IMR-90 (cell line): ENCODE measurements at regions of chr14 and their contacts with region 1.

Region 1: GRCh38 chr14:61561657-61562276 is 133.5 kb upstream of the HIF1A start:
- DNase-seq: peak; percentile 99
- ATAC-seq: peak; percentile 45
- H3K4me3 ChIP-seq: no peak overlapping the region
- H3K27ac ChIP-seq: peak overlapping the region; percentile 87
- H3K4me1 ChIP-seq: peaks cover 53% of the 10 kb centered on the region
- H3K27me3 ChIP-seq: no peaks in the 10 kb centered on the region
- CTCF ChIP-seq: no peak
- POLR2A ChIP-seq: peak; percentile 72; the same call in 1 of the 2 replicates
- RAD21 ChIP-seq: peak; percentile 29

Region 2: GRCh38 chr14:60738843-60739508 is 822.8 kb before region 1 on chr14:
- CTCF ChIA-PET with region 1: no interaction called
- POLR2A ChIA-PET with region 1: no interaction called
- dilution Hi-C with region 1: no loop called
- in situ Hi-C with region 1: no loop called
- intact Hi-C with region 1: no loop called
- DNase-seq: no peak
- ATAC-seq: no peak
- H3K4me3 ChIP-seq: no peak overlapping the region
- H3K27ac ChIP-seq: no peak overlapping the region
- H3K4me1 ChIP-seq: peaks cover 3% of the 10 kb centered on the region
- H3K27me3 ChIP-seq: no peaks in the 10 kb centered on the region
- CTCF ChIP-seq: no peak
- POLR2A ChIP-seq: no peak
- RAD21 ChIP-seq: no peak

Region 3: DNA sequence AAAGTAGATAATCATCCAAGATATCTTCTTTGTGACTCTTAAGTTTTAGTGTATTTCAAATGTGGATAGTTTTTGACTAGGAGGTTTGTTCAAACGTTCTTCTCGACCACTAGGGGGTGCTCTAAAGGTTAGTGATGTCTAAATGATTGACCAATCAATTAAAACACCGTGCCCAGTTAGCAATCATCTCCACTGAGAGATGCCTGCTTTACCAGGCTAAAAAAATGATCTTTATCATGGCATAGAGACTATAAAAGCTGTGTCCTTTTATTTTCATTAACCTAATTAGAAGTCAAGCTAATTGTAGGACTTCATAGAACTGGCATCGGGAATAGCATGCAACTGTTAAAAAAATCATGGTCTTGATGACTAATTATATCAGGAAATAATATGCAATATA is 86.5 kb before region 1 on chr14:
- CTCF ChIA-PET with region 1: interaction called, 6 read pairs
- POLR2A ChIA-PET with region 1: interaction called, 5 read pairs
- dilution Hi-C with region 1: no loop called
- in situ Hi-C with region 1: loop called (anchors 5 kb)
- intact Hi-C with region 1: loop called (anchors 1 kb)
- DNase-seq: peak; percentile 84
- ATAC-seq: no peak
- H3K4me3 ChIP-seq: no peak overlapping the region
- H3K27ac ChIP-seq: no peak overlapping the region; the same call in 1 of the 2 replicates
- H3K4me1 ChIP-seq: peaks cover 45% of the 10 kb centered on the region
- H3K27me3 ChIP-seq: no peaks in the 10 kb centered on the region
- CTCF ChIP-seq: peak; percentile 67
- POLR2A ChIP-seq: no peak
- RAD21 ChIP-seq: peak; percentile 64

Region 4: GRCh38 chr14:61489932-61490331 is 71.8 kb before region 1 on chr14:
- CTCF ChIA-PET with region 1: no interaction called
- POLR2A ChIA-PET with region 1: interaction called, 11 read pairs
- dilution Hi-C with region 1: no loop called
- in situ Hi-C with region 1: no loop called
- intact Hi-C with region 1: no loop called
- DNase-seq: no peak
- ATAC-seq: no peak
- H3K4me3 ChIP-seq: no peak overlapping the region
- H3K27ac ChIP-seq: no peak overlapping the region
- H3K4me1 ChIP-seq: peaks cover 17% of the 10 kb centered on the region
- H3K27me3 ChIP-seq: no peaks in the 10 kb centered on the region
- CTCF ChIP-seq: no peak
- POLR2A ChIP-seq: no peak
- RAD21 ChIP-seq: no peak

Region 5: DNA sequence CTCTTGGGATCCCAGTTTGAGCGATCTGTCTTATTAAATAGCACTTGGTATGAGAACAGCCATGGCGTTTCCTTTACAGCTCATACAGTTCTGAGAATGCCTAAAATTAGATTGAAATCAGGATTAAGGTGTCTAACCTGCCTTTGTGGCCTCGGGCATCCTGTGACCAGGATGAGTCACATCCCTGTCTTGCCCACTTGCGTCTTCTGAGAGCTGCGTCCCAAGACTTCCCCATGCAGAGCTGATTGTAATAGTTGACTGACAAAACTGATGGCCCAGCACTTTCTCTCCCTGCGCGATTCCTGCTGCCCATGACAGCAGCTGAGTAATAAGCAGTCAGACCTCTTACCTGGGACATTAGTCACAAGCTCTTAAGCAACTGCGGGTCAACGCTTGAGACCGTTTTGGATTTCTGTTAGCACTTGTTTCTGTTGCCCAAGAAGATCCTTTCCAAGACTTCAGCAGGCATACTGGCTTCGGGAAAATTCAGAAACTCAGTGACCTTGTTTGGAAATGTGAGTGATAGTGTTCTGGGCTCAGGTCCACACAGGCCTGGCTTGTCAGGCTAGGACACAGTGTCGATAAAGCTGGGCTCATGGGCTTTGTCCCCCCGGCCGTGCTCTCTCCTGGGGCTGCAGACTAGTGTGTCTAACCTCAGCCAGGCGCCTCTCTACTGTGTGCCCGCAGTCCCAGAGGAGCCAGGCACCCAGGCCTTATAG is 36.3 kb before region 1 on chr14:
- CTCF ChIA-PET with region 1: no interaction called
- POLR2A ChIA-PET with region 1: no interaction called
- dilution Hi-C with region 1: no loop called
- in situ Hi-C with region 1: no loop called
- intact Hi-C with region 1: loop called (anchors 1 kb)
- DNase-seq: peak; percentile 52
- ATAC-seq: no peak
- H3K4me3 ChIP-seq: no peak overlapping the region
- H3K27ac ChIP-seq: no peak overlapping the region; the same call in 1 of the 2 replicates
- H3K4me1 ChIP-seq: peaks cover 33% of the 10 kb centered on the region
- H3K27me3 ChIP-seq: no peaks in the 10 kb centered on the region
- CTCF ChIP-seq: no peak
- POLR2A ChIP-seq: no peak
- RAD21 ChIP-seq: no peak

Region 6: DNA sequence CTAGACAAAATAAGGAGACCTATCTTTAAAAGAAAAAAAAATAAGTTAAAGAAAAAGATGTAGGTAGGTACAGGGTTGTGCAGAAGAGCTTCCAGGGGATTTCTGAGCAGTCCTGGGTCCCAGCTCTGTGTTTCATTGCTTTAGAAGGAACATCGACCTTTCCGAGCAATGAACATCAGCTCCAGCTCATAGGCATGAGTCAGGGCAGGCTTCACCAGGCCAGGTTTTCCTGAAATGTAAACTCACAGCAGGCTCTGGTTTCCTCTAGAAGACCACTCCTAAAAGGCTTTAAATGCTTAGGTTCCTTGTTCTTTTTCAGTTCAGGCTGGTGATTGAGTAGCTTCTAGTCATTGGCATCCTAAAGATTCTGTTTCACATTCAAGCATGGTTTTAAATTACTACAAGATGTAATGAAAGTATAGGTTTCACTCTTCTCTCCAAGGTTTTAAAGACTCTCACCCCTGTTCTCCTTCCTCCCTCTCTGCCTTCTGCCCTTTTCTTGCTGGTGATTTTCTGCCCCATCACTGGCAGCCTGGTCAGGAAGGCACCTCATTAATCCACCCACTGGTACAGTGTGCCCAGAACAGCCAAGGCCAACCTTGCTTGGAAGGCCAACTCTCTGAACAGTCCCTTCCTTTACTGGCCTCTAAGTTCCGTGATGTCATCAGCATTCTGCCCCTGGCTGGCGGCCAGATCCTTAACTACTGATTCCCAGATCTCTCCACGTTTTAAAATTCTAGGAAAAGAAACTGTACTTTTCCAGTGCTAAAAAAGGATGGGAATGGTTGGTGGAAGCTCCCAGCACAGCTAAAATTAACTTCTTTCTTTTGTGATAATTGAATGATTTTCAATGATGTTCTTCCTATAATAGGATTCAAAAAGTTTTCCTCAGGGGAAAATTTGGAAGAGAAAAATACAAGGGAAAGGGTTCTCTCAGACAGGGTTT is 24.1 kb after region 1 on chr14:
- CTCF ChIA-PET with region 1: no interaction called
- POLR2A ChIA-PET with region 1: no interaction called
- dilution Hi-C with region 1: no loop called
- in situ Hi-C with region 1: no loop called
- intact Hi-C with region 1: no loop called
- DNase-seq: peak; percentile 93
- ATAC-seq: peak; percentile 71
- H3K4me3 ChIP-seq: no peak overlapping the region
- H3K27ac ChIP-seq: peak overlapping the region; percentile 97
- H3K4me1 ChIP-seq: peaks cover 31% of the 10 kb centered on the region
- H3K27me3 ChIP-seq: no peaks in the 10 kb centered on the region
- CTCF ChIP-seq: no peak
- POLR2A ChIP-seq: 0 out of 2 replicates have a peak, but pooled peaks have one; percentile 34
- RAD21 ChIP-seq: peak; percentile 23; the same call in 1 of the 2 replicates

Region 7: GRCh38 chr14:61609191-61609843 is 47.5 kb after region 1 on chr14:
- CTCF ChIA-PET with region 1: interaction called, 9 read pairs
- POLR2A ChIA-PET with region 1: interaction called, 3 read pairs
- dilution Hi-C with region 1: no loop called
- in situ Hi-C with region 1: no loop called
- intact Hi-C with region 1: loop called (anchors 2 kb)
- DNase-seq: peak; percentile 66
- ATAC-seq: peak; percentile 73
- H3K4me3 ChIP-seq: no peak overlapping the region
- H3K27ac ChIP-seq: peak overlapping the region; percentile 85
- H3K4me1 ChIP-seq: peaks cover 28% of the 10 kb centered on the region
- H3K27me3 ChIP-seq: no peaks in the 10 kb centered on the region
- CTCF ChIP-seq: no peak
- POLR2A ChIP-seq: no peak
- RAD21 ChIP-seq: peak; percentile 12; the same call in 1 of the 2 replicates

Region 8: DNA sequence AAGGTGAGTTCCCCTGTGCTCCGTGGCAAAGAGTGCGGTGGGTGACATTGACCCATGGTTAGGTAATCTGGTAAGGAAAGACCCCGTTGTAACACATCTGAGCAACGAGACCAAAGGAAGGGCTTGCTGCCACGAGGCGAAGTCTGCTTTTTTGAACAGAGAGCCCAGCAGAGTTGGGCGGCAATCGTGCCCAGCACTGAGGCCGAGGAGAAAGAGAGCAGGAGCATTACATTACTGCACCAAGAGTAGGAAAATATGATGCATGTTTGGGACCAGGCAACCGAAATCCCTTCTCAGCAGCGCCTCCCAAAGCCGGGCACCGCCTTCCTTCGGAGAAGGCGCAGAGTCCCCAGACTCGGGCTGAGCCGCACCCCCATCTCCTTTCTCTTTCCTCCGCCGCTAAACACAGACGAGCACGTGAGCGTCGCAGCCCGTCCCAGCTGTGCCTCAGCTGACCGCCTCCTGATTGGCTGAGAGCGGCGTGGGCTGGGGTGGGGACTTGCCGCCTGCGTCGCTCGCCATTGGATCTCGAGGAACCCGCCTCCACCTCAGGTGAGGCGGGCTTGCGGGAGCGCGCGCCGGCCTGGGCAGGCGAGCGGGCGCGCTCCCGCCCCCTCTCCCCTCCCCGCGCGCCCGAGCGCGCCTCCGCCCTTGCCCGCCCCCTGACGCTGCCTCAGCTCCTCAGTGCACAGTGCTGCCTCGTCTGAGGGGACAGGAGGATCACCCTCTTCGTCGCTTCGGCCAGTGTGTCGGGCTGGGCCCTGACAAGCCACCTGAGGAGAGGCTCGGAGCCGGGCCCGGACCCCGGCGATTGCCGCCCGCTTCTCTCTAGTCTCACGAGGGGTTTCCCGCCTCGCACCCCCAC is 133.3 kb after region 1 on chr14 and contains the start of gene HIF1A:
- CTCF ChIA-PET with region 1: interaction called, 4 read pairs
- POLR2A ChIA-PET with region 1: interaction called, 9 read pairs
- dilution Hi-C with region 1: no loop called
- in situ Hi-C with region 1: no loop called
- intact Hi-C with region 1: loop called (anchors 1 kb)
- DNase-seq: peak; percentile 99
- ATAC-seq: peak; percentile 94
- H3K4me3 ChIP-seq: peak within 1 kb of the TSS; percentile 94
- H3K27ac ChIP-seq: peak within 1 kb of the TSS; percentile 90
- H3K4me1 ChIP-seq: no peaks in the 10 kb centered on the region; the same call in none of the 2 replicates
- H3K27me3 ChIP-seq: no peaks in the 10 kb centered on the region
- CTCF ChIP-seq: peak; percentile 30; the same call in 1 of the 2 replicates
- POLR2A ChIP-seq: peak; percentile 97
- RAD21 ChIP-seq: peak; percentile 48
- total RNA-seq, gene HIF1A: 301 and 493 TPM in 2 replicates

Region 9: DNA sequence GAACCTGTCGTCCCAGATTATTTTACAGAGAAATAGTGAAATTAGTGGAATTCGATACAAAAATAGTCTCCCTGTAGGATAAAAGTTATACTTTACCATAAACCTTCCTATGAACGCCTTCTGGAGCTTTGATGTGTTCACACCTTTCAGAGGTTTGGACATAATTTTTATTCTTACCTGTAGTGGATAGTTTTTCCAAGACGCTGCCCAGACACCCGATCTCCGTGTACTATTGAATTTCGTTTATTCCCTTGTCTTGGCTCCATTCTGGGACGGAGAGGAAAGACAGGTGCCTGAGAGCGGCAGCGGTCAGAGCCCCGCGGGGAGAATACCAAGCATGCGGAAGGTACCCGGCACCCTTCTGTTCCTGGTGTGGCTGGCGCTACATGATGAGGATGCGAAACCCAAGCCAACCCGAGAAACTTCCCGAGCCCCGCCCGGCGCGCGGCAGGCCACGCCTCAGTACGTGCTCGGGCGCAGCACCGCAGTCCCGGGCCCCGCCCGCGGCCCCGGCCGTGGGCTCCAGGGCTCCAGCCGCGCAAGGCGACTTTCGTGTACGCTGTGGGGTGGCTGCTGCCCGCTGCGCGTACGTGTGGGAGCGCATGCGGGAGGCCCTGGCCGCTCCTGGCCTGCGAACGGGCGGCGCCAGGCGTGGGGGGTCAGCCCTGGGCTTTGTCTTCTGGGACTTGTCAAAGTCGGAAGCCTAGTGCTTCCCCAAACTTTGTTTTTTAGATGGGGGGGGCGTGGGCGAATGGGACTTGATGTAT is 189.1 kb after region 1 on chr14:
- CTCF ChIA-PET with region 1: interaction called, 4 read pairs
- POLR2A ChIA-PET with region 1: no interaction called
- dilution Hi-C with region 1: no loop called
- in situ Hi-C with region 1: no loop called
- intact Hi-C with region 1: loop called (anchors 5 kb)
- DNase-seq: peak; percentile 59
- ATAC-seq: peak; percentile 61
- H3K4me3 ChIP-seq: peak overlapping the region; percentile 86; the same call in 1 of the 2 replicates
- H3K27ac ChIP-seq: peak overlapping the region; percentile 88
- H3K4me1 ChIP-seq: peaks cover 13% of the 10 kb centered on the region
- H3K27me3 ChIP-seq: no peaks in the 10 kb centered on the region
- CTCF ChIP-seq: no peak
- POLR2A ChIP-seq: no peak; the same call in 1 of the 2 replicates
- RAD21 ChIP-seq: no peak

Region 10: GRCh38 chr14:61803755-61804154 is 242.0 kb after region 1 on chr14:
- CTCF ChIA-PET with region 1: no interaction called
- POLR2A ChIA-PET with region 1: no interaction called
- dilution Hi-C with region 1: no loop called
- in situ Hi-C with region 1: no loop called
- intact Hi-C with region 1: no loop called
- DNase-seq: no peak
- ATAC-seq: no peak
- H3K4me3 ChIP-seq: no peak overlapping the region
- H3K27ac ChIP-seq: no peak overlapping the region
- H3K4me1 ChIP-seq: peaks cover 3% of the 10 kb centered on the region; the same call in 1 of the 2 replicates
- H3K27me3 ChIP-seq: no peaks in the 10 kb centered on the region
- CTCF ChIP-seq: no peak
- POLR2A ChIP-seq: no peak
- RAD21 ChIP-seq: no peak